B cell (primary cell): ENCODE measurements at regions of chr7 and their contacts with region 1.

Region 1: GRCh38 chr7:43553999-43554398 is 28.9 kb upstream of the STK17A start:
- DNase-seq: no peak
- ATAC-seq: no peak
- H3K4me3 ChIP-seq: no peak overlapping the region
- H3K4me3 Mint-ChIP-seq: no peak overlapping the region
- H3K27ac ChIP-seq: no peak overlapping the region
- H3K27ac Mint-ChIP-seq: no peak overlapping the region
- H3K4me1 ChIP-seq: no peaks in the 10 kb centered on the region
- H3K4me1 Mint-ChIP-seq: no peaks in the 10 kb centered on the region
- H3K27me3 ChIP-seq: peaks cover 0 to 2% (median 0%) of the 10 kb centered on the region in 4 experiments
- H3K27me3 Mint-ChIP-seq: peaks cover 44% of the 10 kb centered on the region
- CTCF ChIP-seq: no peak

Region 2: DNA sequence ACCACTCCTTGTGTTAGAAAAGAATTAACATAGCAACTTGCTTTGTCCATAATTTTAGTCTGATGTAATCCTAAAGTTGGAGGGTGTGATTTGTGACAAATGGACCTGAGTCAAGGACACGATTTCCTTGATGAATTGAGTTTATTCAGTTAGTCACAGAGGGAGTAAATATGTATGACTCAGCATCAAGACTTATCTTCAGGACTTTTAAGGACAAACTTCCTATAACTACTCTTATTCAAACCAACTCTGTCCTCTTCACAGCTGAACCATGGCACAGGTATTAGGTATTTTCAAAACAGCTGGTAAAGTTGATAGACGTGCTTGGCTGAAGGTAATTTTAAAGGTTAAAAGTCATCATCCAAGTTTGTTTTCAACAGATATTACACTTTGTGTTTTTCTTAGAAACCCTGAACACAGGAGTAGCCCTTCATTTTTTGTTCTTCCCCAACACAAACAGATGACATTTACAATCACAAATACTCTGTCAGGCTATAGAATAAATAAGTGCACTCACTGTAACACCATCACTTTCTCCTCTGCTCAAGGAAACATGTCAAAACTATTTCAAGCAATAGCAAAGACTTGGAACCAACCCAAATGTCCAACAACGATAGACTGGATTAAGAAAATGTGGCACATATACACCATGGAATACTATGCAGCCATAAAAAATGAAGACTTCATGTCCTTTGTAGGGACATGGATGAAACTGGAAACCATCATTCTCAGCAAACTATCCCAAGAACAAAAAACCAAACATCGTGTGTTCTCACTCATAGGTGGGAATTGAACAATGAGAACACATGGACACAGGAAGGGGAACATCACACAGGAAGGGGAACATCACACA is 120.8 kb after region 1 on chr7:
- CTCF ChIA-PET with region 1: no interaction called
- POLR2A ChIA-PET with region 1: interaction called, 16 read pairs
- intact Hi-C with region 1: no loop called
- DNase-seq: no peak
- ATAC-seq: no peak
- H3K4me3 ChIP-seq: no peak overlapping the region
- H3K4me3 Mint-ChIP-seq: no peak overlapping the region
- H3K27ac ChIP-seq: peak overlapping the region in 1 of 2 donors; percentile 2
- H3K27ac Mint-ChIP-seq: peak overlapping the region; percentile 61
- H3K4me1 ChIP-seq: peaks cover 22 to 52% of the 10 kb centered on the region in 2 donors
- H3K4me1 Mint-ChIP-seq: peaks cover 58% of the 10 kb centered on the region
- H3K27me3 ChIP-seq: no peaks in the 10 kb centered on the region
- H3K27me3 Mint-ChIP-seq: no peaks in the 10 kb centered on the region
- CTCF ChIP-seq: no peak